SK-N-SH (cell line): ENCODE measurements at regions of chr3 and their contacts with region 1.

Region 1: DNA sequence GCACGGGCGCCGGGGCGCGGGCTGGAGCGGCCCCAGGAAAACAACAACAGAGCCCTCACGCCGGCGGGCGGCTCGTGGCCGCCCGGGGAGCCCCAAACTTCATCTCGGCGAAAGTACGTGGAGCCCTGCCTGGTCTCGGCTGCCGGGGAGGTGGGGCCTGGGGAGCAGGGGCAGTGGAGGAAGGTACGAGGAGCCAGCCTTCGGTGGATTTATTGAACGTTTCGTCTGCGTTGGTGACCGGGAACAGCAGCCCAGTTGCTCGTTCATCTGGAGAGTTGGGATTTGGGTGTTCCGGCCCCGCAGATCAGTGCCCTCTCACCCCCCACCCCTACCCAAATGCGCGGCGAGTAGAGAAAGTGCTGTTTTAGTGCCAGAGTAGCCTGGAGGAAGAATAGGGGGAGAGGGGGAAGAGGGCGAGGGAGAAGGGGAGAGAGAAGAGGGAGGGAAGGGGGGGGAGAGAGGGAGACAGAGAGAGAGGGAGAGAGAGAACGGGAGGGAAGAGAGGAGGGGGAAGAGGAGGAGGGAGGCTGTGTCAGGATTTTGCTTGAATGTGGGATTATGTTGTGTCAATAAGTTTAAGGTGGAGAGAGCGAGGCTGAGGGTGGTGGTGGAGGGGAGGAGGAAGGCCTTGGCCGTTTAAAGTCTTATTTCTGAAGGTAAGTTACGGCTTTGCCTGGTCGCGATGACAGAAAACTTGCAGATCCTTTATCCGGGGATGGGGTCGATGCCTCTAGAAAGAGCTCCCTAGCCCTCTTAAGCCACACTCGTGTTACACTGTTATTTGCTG is 970 bp downstream of the BBX start:
- DNase-seq: peak; percentile 40
- H3K4me3 ChIP-seq: peak overlapping the region; percentile 78 to 89
- H3K27ac ChIP-seq: peak overlapping the region; percentile 86 to 92
- H3K4me1 ChIP-seq: peaks cover 6 to 9% of the 10 kb centered on the region in 2 experiments; a peak in 3 of 4 replicates
- H3K27me3 ChIP-seq: no peaks in the 10 kb centered on the region
- CTCF ChIP-seq: no peak
- EP300 ChIP-seq: no peak
- RAD21 ChIP-seq: no peak

Region 2: DNA sequence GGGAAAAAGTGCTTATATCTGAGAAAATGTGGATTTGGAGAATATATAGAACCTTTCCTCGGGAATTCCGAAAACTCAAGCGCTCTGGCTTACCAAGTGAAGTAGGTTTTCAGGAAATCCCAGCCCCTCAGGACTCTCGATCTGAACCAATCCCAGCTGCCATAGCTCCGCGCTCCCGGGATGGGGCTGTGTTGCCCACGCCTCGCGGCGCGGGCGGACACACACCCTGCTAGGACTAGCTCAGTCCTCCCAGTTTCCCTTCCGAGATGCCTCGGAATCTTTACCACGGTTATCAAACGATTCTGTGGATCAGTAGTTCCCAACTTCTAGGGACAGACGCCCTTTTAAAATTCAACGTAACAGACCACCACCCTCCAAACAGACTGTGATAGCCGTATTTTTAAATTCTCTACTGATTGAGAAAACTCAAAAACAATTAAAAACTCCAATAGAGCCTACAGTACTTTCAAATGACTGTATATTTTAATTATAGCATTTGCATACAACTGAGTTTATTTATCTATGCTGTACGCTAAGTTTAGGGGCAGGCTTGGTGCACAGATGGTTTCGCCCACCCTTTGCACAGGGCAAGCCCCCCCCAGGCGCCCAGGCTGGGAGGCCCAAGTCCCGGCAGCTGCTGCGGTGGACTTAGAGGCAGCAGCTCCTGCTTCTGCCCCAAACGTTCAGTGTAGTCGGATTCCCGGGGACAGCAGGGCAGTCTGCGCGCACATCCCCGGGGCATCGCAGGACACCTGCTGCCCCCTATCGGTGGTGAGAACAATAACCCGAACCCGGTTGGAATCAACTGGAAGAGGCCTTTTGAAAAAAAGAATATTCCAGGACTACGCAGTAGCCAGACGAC is 94.2 kb before region 1 on chr3:
- CTCF ChIA-PET with region 1: interaction called, 4 read pairs
- POLR2A ChIA-PET with region 1: interaction called, 18 read pairs
- DNase-seq: peak; percentile 82
- H3K4me3 ChIP-seq: no peak overlapping the region; a peak in 1 of 4 replicates
- H3K27ac ChIP-seq: no peak overlapping the region
- H3K4me1 ChIP-seq: peaks cover 7 to 8% of the 10 kb centered on the region in 2 experiments; a peak in 3 of 4 replicates
- H3K27me3 ChIP-seq: no peaks in the 10 kb centered on the region
- CTCF ChIP-seq: peak; percentile 55
- EP300 ChIP-seq: no peak
- RAD21 ChIP-seq: peak; percentile 46